ENCODE measurements at regions of chr12 and their contacts with region 1.

Region 1: DNA sequence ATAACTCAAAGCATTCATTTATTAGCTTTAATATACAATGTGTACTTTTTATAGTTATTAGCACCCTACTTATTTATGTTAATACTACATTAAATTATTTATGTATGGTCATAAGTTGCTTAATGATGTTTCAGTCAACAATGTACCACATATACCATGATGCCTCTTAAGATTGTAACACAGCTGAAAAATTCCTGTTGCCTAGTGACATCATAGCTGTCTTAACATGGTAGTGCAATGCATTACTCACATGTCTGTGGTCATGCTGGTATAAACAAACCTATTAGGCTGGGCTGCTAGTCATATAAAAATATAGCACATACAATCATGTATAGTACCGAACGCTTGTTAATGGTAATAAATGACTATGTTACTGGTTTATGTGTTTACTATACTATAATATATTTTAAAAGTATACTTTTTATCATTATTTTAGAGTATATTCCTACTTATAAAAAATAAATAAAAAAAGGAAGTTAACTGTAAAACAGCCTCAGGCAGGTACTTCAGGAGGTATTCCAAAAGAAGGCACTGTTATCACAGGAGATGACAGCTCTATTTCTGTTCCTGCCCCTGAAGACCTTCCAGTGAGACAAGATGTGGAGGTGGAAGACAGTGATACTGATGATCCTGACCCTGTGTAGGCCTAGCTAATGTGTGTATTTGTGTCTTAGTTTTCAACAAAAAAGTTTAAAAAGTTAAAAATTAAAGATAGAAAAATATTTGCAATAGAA is 120.6 kb downstream of the ANO6 start:
- DNase-seq: peak; percentile 99
- ATAC-seq: peak; percentile 79
- H3K4me3 ChIP-seq: no peak overlapping the region
- H3K27ac ChIP-seq: peak overlapping the region; percentile 81; the same call in 1 of the 2 replicates
- H3K4me1 ChIP-seq: no peaks in the 10 kb centered on the region
- H3K27me3 ChIP-seq: no peaks in the 10 kb centered on the region
- CTCF ChIP-seq: no peak
- POLR2A ChIP-seq: no peak
- RAD21 ChIP-seq: no peak

Region 2: DNA sequence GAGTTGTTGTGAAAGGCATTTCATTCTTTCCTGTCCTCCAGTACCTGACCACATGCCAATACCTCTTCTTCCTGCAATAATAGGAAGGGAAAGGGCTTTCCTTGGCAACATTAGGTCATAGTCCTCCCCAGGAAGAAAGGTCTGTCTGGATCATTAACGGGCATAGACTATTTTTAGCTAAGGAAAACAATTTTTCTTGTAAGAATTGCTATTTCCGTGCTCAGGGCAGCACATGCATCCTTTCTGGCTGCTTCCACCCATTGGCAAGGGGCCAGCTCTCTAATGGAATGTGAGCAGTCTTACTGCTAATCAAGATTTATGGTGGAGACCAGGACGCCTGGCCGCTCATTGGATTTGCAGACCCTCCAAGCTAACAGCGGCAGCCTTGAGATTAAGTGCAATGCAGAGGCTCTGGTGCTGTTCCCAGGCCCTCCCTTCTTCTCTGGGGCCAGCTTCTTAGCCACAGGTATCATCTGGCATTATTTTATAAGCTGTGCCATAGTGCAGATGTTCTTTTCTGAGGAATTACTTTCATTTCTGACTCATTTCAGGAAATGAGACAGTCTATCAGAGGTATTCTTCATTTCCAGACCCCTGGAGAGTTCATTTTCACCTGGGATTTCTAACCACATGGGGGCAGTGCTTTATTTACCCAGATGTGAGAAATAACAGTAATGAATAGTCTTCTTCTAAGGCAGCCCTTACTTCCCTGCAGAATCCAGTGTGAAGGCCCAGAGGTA is 67.7 kb before region 1 on chr12:
- CTCF ChIA-PET with region 1: no interaction called
- POLR2A ChIA-PET with region 1: no interaction called
- dilution Hi-C with region 1: no loop called
- in situ Hi-C with region 1: no loop called
- intact Hi-C with region 1: loop called (anchors 1 kb)
- DNase-seq: peak; percentile 82
- ATAC-seq: peak; percentile 47
- H3K4me3 ChIP-seq: no peak overlapping the region
- H3K27ac ChIP-seq: no peak overlapping the region
- H3K4me1 ChIP-seq: peaks cover 9% of the 10 kb centered on the region
- H3K27me3 ChIP-seq: no peaks in the 10 kb centered on the region
- CTCF ChIP-seq: peak; percentile 61
- POLR2A ChIP-seq: no peak
- RAD21 ChIP-seq: peak; percentile 63

Region 3: DNA sequence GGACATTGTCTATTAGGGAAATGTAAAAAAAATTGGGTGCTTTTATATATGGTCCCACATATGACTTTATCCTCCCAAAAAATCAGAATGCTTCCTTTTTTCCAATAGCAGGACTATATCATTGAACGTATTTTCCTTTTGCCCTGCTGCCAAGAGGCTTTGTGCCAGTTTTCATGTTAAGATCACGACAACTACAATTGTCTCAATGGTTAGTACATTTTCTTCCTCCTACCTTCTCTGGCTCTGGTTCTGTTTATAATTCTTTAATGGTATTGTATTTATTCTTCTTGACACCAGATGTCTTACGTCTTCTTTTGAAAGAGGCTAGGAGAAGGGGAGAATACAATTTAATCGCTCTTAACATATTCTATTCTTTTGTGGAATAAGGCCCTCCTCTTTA is 13.7 kb before region 1 on chr12:
- CTCF ChIA-PET with region 1: interaction called, 3 read pairs
- POLR2A ChIA-PET with region 1: no interaction called
- dilution Hi-C with region 1: no loop called
- in situ Hi-C with region 1: no loop called
- intact Hi-C with region 1: loop called (anchors 1 kb)
- DNase-seq: no peak
- ATAC-seq: no peak
- H3K4me3 ChIP-seq: no peak overlapping the region
- H3K27ac ChIP-seq: no peak overlapping the region
- H3K4me1 ChIP-seq: peaks cover 1% of the 10 kb centered on the region; the same call in 1 of the 2 replicates
- H3K27me3 ChIP-seq: no peaks in the 10 kb centered on the region
- CTCF ChIP-seq: no peak
- POLR2A ChIP-seq: no peak
- RAD21 ChIP-seq: no peak

Region 4: GRCh38 chr12:45362291-45362690 is 25.8 kb after region 1 on chr12:
- CTCF ChIA-PET with region 1: no interaction called
- POLR2A ChIA-PET with region 1: no interaction called
- dilution Hi-C with region 1: no loop called
- in situ Hi-C with region 1: no loop called
- intact Hi-C with region 1: no loop called
- DNase-seq: no peak
- ATAC-seq: no peak
- H3K4me3 ChIP-seq: no peak overlapping the region
- H3K27ac ChIP-seq: no peak overlapping the region
- H3K4me1 ChIP-seq: no peaks in the 10 kb centered on the region
- H3K27me3 ChIP-seq: no peaks in the 10 kb centered on the region
- CTCF ChIP-seq: no peak
- POLR2A ChIP-seq: no peak
- RAD21 ChIP-seq: no peak